ENCODE measurements at regions of chr17 and their contacts with region 1.

Region 1: GRCh38 chr17:49815761-49816281 is 27.3 kb downstream of the KAT7 start:
- DNase-seq: no peak
- ATAC-seq: no peak
- H3K4me3 ChIP-seq: no peak overlapping the region
- H3K27ac ChIP-seq: no peak overlapping the region
- H3K4me1 ChIP-seq: no peaks in the 10 kb centered on the region
- H3K27me3 ChIP-seq: no peaks in the 10 kb centered on the region
- CTCF ChIP-seq: no peak

Region 2: GRCh38 chr17:49588726-49589576 is 226.9 kb before region 1 on chr17:
- CTCF ChIA-PET with region 1: no interaction called
- POLR2A ChIA-PET with region 1: interaction called, 10 read pairs
- intact Hi-C with region 1: no loop called
- DNase-seq: peak; percentile 51
- ATAC-seq: peak; percentile 65
- H3K4me3 ChIP-seq: no peak overlapping the region
- H3K27ac ChIP-seq: peak overlapping the region; percentile 18
- H3K4me1 ChIP-seq: peaks cover 14% of the 10 kb centered on the region
- H3K27me3 ChIP-seq: no peaks in the 10 kb centered on the region
- CTCF ChIP-seq: no peak

Region 3: GRCh38 chr17:49646391-49647255 is 169.2 kb before region 1 on chr17:
- CTCF ChIA-PET with region 1: no interaction called
- POLR2A ChIA-PET with region 1: no interaction called
- intact Hi-C with region 1: no loop called
- DNase-seq: peak; percentile 88
- ATAC-seq: peak; percentile 99
- H3K4me3 ChIP-seq: peak overlapping the region; percentile 54
- H3K27ac ChIP-seq: peak overlapping the region; percentile 62
- H3K4me1 ChIP-seq: peaks cover 19% of the 10 kb centered on the region
- H3K27me3 ChIP-seq: no peaks in the 10 kb centered on the region
- CTCF ChIP-seq: no peak

Region 4: GRCh38 chr17:49755663-49756283 is 60.0 kb before region 1 on chr17:
- CTCF ChIA-PET with region 1: no interaction called
- POLR2A ChIA-PET with region 1: no interaction called
- intact Hi-C with region 1: no loop called
- DNase-seq: no peak
- ATAC-seq: no peak
- H3K4me3 ChIP-seq: no peak overlapping the region
- H3K27ac ChIP-seq: no peak overlapping the region
- H3K4me1 ChIP-seq: no peaks in the 10 kb centered on the region
- H3K27me3 ChIP-seq: no peaks in the 10 kb centered on the region
- CTCF ChIP-seq: no peak